ENCODE measurements at regions of chr10 and their contacts with region 1.

Region 1: DNA sequence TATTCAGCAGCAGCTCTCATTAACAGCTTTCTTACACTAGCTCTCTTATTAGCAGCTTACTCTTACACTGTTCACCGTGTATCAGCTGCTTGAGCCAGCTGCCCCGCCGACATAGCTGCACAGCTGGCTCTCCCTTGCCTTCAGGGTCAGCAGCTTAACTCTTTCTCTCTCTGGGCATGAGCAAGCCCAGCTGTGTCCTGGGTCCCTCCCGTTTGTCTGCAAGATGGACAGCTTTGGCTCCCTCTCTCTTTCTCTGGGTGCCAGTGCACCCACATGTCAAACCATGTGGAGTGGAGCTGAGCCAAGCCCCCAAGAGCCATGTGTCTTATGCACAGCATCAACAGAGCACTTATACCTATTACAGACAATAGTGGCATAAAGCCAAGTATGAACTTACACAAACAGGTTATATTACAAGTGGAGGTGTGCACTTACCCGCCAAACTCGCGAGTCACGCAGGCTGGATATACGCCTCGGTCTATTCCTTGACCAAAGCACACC is 35.7 kb upstream of the MTPAP start:
- DNase-seq: peak; percentile 50
- H3K4me3 ChIP-seq: no peak overlapping the region
- H3K27ac ChIP-seq: no peak overlapping the region
- H3K4me1 ChIP-seq: peaks cover 20% of the 10 kb centered on the region
- H3K27me3 ChIP-seq: peaks cover 4% of the 10 kb centered on the region
- CTCF ChIP-seq: peak; percentile 64 to 70

Region 2: GRCh38 chr10:30270247-30270646 is 114.5 kb before region 1 on chr10:
- CTCF ChIA-PET with region 1: interaction called, 5 read pairs
- dilution Hi-C with region 1: no loop called
- in situ Hi-C with region 1: no loop called
- intact Hi-C with region 1: loop called (anchors 5 kb)
- DNase-seq: no peak
- H3K4me3 ChIP-seq: no peak overlapping the region
- H3K27ac ChIP-seq: no peak overlapping the region
- H3K4me1 ChIP-seq: no peaks in the 10 kb centered on the region
- H3K27me3 ChIP-seq: peaks cover 5% of the 10 kb centered on the region
- CTCF ChIP-seq: peak in 1 of 2 donors; percentile 3

Region 3: DNA sequence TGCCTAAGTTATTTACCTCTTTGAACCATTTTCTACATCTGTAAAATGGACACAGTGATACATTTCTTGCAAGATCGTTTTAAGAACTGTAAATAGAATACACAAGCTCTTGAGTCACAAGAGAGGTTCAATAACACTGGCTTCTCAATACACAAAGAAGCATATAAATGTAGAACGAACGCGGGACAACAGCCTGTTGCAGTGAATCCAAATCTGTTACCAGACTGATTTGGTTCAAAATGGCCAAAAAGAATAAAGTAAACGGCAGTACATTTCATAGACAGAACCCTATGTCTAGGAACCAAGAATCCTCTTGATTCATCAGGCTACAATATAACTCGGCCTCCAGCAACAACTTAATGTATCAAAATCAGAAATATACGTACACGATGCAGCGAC is 36.4 kb before region 1 on chr10:
- CTCF ChIA-PET with region 1: no interaction called
- dilution Hi-C with region 1: no loop called
- in situ Hi-C with region 1: no loop called
- intact Hi-C with region 1: loop called (anchors 5 kb)
- DNase-seq: no peak
- H3K4me3 ChIP-seq: peak overlapping the region; percentile 60 to 99 (median 81)
- H3K27ac ChIP-seq: peak overlapping the region; percentile 85
- H3K4me1 ChIP-seq: peaks cover 6% of the 10 kb centered on the region
- H3K27me3 ChIP-seq: no peaks in the 10 kb centered on the region
- CTCF ChIP-seq: no peak